CD8-positive, alpha-beta T cell (primary cell): ENCODE measurements at regions of chr17 and their contacts with region 1.

Region 1: GRCh38 chr17:36705874-36706731 is 104.7 kb downstream of the MRM1 start:
- DNase-seq: peak in 8 of 9 experiments; percentile 13 to 72 (median 48)
- ATAC-seq: peak; percentile 69
- H3K4me3 ChIP-seq: no peak overlapping the region
- H3K4me3 Mint-ChIP-seq: no peak overlapping the region
- H3K27ac ChIP-seq: no peak overlapping the region
- H3K27ac Mint-ChIP-seq: no peak overlapping the region
- H3K4me1 ChIP-seq: no peaks in the 10 kb centered on the region
- H3K4me1 Mint-ChIP-seq: no peaks in the 10 kb centered on the region
- H3K27me3 ChIP-seq: peaks cover 11 to 12% of the 10 kb centered on the region in 2 experiments
- H3K27me3 Mint-ChIP-seq: peaks cover 33% of the 10 kb centered on the region
- CTCF ChIP-seq: peak; percentile 73

Region 2: GRCh38 chr17:35841101-35841500 is 865.0 kb before region 1 on chr17:
- CTCF ChIA-PET with region 1: no interaction called
- POLR2A ChIA-PET with region 1: no interaction called
- intact Hi-C with region 1: no loop called
- DNase-seq: no peak
- ATAC-seq: no peak
- H3K4me3 ChIP-seq: no peak overlapping the region
- H3K4me3 Mint-ChIP-seq: no peak overlapping the region
- H3K27ac ChIP-seq: no peak overlapping the region
- H3K27ac Mint-ChIP-seq: no peak overlapping the region
- H3K4me1 ChIP-seq: no peaks in the 10 kb centered on the region
- H3K4me1 Mint-ChIP-seq: no peaks in the 10 kb centered on the region
- H3K27me3 ChIP-seq: no peaks in the 10 kb centered on the region
- H3K27me3 Mint-ChIP-seq: no peaks in the 10 kb centered on the region
- CTCF ChIP-seq: no peak

Region 3: GRCh38 chr17:36657763-36658490 is 48.2 kb before region 1 on chr17:
- CTCF ChIA-PET with region 1: interaction called, 14 read pairs
- POLR2A ChIA-PET with region 1: no interaction called
- intact Hi-C with region 1: loop called in 1 of 2 experiments (anchors 1 kb)
- DNase-seq: peak in 5 of 9 experiments; percentile 13 to 58 (median 17)
- ATAC-seq: no peak
- H3K4me3 ChIP-seq: peak overlapping the region; percentile 10 to 33
- H3K4me3 Mint-ChIP-seq: peak overlapping the region; percentile 67
- H3K27ac ChIP-seq: no peak overlapping the region
- H3K27ac Mint-ChIP-seq: no peak overlapping the region
- H3K4me1 ChIP-seq: no peaks in the 10 kb centered on the region
- H3K4me1 Mint-ChIP-seq: peaks cover 4% of the 10 kb centered on the region
- H3K27me3 ChIP-seq: peaks cover 6 to 15% of the 10 kb centered on the region in 2 experiments
- H3K27me3 Mint-ChIP-seq: peaks cover 43% of the 10 kb centered on the region
- CTCF ChIP-seq: no peak

Region 4: DNA sequence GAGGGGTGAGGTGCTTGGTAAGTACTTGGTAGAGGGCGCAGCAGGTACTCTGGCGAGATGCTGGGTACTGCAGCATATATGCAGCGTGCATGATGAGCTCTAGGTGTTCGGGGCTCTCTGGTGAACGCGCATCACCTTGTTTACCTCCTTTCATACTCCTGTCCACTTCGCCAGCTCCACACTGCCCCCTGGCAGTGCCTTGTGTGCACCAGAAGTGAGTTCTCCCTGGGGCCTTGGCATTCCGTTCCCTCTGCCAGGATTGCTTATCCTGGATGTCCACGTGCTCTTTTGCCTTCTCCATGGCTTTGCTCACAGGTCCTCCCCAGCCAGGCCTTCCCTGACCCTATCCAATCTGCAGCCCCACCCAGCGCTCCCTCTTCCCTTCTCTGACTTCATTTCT is 49.5 kb after region 1 on chr17:
- CTCF ChIA-PET with region 1: interaction called, 30 read pairs
- POLR2A ChIA-PET with region 1: no interaction called
- intact Hi-C with region 1: loop called in 1 of 2 experiments (anchors 1 kb)
- DNase-seq: peak in 7 of 9 experiments; percentile 8 to 55 (median 38)
- ATAC-seq: no peak
- H3K4me3 ChIP-seq: no peak overlapping the region
- H3K4me3 Mint-ChIP-seq: no peak overlapping the region
- H3K27ac ChIP-seq: no peak overlapping the region
- H3K27ac Mint-ChIP-seq: no peak overlapping the region
- H3K4me1 ChIP-seq: no peaks in the 10 kb centered on the region
- H3K4me1 Mint-ChIP-seq: no peaks in the 10 kb centered on the region
- H3K27me3 ChIP-seq: no peaks in the 10 kb centered on the region
- H3K27me3 Mint-ChIP-seq: peaks cover 4% of the 10 kb centered on the region
- CTCF ChIP-seq: peak; percentile 39